Posterior vena cava (tissue), 2 donors: ENCODE measurements at regions of chr10 and their contacts with region 1.

Region 1: GRCh38 chr10:43093423-43094076 is 16.7 kb downstream of the RET start:
- DNase-seq: no peak

Region 2: GRCh38 chr10:43071865-43072650 is 21.5 kb before region 1 on chr10:
- intact Hi-C with region 1: loop called in 1 of 2 experiments (anchors 1 kb)
- DNase-seq: no peak

Region 3: GRCh38 chr10:43119416-43120115 is 26.0 kb after region 1 on chr10:
- intact Hi-C with region 1: loop called in 1 of 2 experiments (anchors 1 kb)
- DNase-seq: peak; percentile 79